Heart right ventricle (tissue), 16 donors: ENCODE measurements at regions of chr1 and their contacts with region 1.

Region 1: DNA sequence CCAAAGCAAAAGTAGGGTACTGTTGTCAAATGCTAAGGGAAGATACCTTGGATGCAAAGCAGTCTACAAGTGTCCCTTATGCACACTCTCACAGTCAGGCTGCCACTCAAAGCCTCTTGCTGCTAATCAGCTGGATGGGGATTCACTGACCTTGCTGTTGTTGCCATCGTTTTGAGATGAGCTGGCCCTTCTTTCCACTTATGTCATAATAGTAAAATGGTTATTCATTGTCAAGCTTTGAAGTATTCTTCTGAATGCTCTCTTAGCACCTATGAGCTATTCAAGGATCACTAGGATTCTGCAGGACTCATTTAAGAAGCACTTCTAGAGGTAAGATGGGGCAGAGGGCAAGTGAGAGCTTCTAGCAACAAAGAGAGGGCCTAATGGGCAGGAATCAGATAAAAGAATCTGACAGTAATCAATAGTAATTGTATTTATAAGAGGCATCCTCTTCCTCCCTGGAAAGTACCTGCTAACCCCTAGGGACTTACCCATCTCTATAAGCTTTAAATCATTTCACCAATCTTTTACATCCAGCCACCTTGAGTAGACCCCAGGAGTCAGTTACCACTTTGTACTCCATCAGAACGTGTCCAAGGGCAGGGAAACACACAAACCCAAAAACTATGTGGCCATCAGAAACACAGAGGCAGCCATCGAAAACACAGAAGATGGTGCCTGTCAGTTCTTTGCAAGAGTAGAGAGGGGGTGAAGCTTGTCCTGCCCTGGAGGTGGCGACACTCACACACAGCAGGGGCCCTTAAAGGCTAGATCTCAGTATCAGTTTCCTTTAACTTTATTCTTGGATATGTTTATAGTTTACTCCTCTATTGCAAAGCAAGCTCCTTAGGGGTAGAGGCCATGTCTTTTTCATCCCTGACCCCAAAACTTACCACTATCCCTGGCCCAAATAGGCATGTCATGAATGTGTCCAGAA is 103.7 kb upstream of the NFIA start:
- DNase-seq: peak in 1 of 2 donors; percentile 23
- ATAC-seq: peak in 4 of 8 donors; percentile 39 to 61 (median 43)
- H3K4me3 ChIP-seq: no peak overlapping the region
- H3K27ac ChIP-seq: no peak overlapping the region
- H3K4me1 ChIP-seq: peaks cover 0 to 14% (median 6%) of the 10 kb centered on the region in 9 donors
- H3K27me3 ChIP-seq: no peaks in the 10 kb centered on the region
- CTCF ChIP-seq: peak in 8 of 9 donors; percentile 16 to 67 (median 53)

Region 2: DNA sequence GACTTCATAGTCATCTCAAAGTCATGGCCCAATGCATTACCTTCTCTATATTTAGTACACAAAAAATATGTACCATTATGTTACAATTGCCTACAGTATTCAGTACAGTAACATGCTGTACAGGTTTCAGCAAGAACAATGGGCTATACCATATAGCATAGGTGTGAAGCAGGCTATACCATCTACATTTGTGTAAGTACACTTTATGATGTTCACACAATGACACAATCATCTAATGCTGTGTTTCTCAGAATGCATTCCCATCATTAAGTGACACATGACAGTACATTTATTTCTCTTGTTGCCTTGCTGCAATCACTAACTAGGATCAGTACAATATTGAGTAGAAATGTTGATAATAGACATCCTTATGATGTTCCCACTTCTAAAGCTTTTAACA is 57.2 kb after region 1 on chr1:
- intact Hi-C with region 1: loop called in 6 of 10 experiments (anchors 5 to 10 kb)
- DNase-seq: no peak
- ATAC-seq: no peak
- H3K4me3 ChIP-seq: no peak overlapping the region
- H3K27ac ChIP-seq: no peak overlapping the region
- H3K4me1 ChIP-seq: no peaks in the 10 kb centered on the region
- H3K27me3 ChIP-seq: no peaks in the 10 kb centered on the region
- CTCF ChIP-seq: no peak

Region 3: GRCh38 chr1:61343734-61344420 is 365.2 kb after region 1 on chr1:
- intact Hi-C with region 1: loop called in 1 of 10 experiments (anchors 10 kb)
- DNase-seq: no peak
- ATAC-seq: peak in 3 of 8 donors; percentile 18 to 31 (median 22)
- H3K4me3 ChIP-seq: no peak overlapping the region
- H3K27ac ChIP-seq: peak overlapping the region in 5 of 10 donors; percentile 3 to 55 (median 24)
- H3K4me1 ChIP-seq: peaks cover 5 to 44% (median 32%) of the 10 kb centered on the region in 9 donors
- H3K27me3 ChIP-seq: no peaks in the 10 kb centered on the region
- CTCF ChIP-seq: no peak

Region 4: DNA sequence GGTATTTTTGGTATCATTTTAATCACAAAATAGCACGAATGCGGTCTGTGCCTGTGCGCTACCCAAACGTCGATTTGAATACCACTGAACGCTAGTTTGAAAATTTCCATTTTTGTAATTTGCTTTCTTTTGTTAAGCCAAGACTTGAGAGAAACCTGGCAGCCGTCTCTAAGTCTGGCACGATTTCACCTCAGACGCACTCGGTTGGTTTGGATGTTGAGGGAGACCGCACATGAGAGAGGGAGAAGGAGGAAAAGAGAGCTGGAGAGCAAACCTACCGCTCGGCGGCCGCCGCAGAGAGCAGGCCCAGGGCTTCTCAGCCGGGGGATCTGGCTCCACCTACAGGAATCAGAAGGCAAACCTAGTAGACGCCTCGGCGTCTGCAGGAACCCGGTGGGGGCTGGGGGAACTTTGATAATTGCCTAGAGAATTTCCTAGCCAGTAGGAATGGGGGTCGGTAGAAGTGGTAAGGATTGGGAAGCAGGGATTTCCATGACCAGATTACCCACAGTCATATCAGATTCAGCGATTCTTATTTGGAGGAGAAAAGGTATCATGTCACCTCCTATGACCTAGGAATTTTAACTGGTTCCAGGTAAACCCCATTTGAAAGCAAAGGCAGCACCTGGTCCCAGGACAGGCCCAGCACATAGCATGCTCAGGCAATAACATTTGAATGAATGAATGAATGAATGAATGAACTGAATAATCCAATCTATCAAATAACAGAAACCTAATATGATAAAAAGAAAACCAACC is 663.1 kb after region 1 on chr1:
- intact Hi-C with region 1: loop called in 5 of 10 experiments (anchors 5 to 10 kb)
- DNase-seq: peak; percentile 78 to 79
- ATAC-seq: peak; percentile 82 to 91 (median 88)
- H3K4me3 ChIP-seq: peak overlapping the region in 6 of 10 donors; percentile 28 to 49 (median 31)
- H3K27ac ChIP-seq: peak overlapping the region in 9 of 10 donors; percentile 39 to 90 (median 77)
- H3K4me1 ChIP-seq: peaks cover 0 to 32% (median 25%) of the 10 kb centered on the region in 9 donors
- H3K27me3 ChIP-seq: no peaks in the 10 kb centered on the region
- CTCF ChIP-seq: peak; percentile 52 to 92 (median 84)

Region 5: DNA sequence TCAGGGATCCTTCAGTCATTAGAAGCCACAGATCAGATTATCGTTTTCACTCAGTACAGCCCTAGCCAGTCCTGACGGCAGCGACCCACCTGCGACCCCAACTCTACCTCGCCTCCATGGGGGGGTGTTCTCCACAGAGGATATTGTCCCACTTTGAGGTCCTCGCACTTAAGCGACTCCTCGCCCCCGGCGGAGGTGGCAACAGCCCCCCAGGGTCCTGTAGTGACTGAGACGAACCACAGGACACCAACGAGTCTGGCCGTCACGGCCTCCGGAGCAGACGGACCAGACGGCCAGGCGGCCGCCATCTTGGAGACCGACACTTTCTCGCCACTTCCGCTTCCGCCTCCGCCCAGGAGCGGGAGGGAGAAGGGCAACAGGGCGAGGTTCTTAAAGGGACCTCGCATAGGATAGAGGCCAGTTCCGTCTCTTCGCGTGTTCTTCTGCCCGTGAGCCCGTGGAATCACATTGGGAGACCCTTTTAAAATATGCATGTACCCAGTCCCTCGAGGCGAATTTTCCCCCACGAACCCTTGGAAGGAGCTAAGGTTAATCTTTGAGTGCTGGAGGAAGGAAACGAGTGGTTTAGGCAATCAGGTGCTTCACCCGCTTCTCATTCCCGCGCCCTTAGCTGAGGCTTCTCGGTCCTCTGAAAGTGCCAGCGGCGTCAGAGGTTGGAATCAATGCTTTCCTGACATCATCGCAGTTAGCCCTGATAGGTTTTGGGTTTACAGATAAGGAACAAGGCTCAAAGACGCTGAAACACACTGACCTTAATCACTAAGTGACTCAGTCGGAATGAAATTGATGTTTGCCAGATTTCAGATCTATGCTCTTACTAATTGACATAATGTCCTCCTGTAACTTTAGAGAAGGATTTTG is 746.4 kb after region 1 on chr1 and contains the start of gene TM2D1:
- intact Hi-C with region 1: loop called in 1 of 10 experiments (anchors 10 kb)
- DNase-seq: peak; percentile 89
- ATAC-seq: peak; percentile 98 to 100 (median 99)
- H3K4me3 ChIP-seq: peak within 1 kb of the TSS; percentile 75 to 97 (median 80)
- H3K27ac ChIP-seq: peak within 1 kb of the TSS; percentile 77 to 98 (median 91)
- H3K4me1 ChIP-seq: peaks cover 5 to 30% (median 20%) of the 10 kb centered on the region in 9 donors
- H3K27me3 ChIP-seq: no peaks in the 10 kb centered on the region
- CTCF ChIP-seq: no peak
- total RNA-seq, gene TM2D1: 29.4 to 44.7 (median 36.8) TPM

Region 6: DNA sequence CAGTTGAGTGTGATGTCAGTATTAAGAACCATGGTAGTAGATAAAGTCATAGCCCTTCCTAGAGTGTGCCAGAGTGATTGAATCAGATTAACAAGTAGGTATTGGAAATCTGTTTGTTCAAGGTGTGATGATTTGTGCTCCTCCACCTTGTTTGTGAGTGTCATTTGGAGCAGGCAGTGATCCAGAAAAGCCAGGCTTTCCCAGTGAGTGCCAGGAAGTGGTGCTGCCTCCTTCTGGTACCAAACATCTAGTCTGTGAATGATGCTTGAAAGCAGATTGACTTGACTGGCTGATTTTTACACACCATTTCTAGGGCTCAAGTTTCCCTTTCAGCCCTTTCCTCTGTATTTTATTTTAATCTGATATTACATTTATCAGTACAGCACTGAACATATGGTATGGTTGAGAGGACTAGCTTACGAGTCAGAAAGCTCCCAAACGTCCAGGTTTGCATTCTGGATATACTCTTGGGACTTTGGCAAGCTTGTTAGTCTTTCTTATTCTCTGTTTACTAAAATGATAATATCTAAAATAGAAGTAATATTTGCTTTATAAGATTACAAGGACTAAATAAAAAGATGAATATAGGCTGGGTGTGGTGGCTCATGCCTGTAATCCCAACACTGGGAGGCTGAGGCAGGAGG is 864.3 kb after region 1 on chr1:
- intact Hi-C with region 1: loop called in 1 of 10 experiments (anchors 10 kb)
- DNase-seq: no peak
- ATAC-seq: no peak
- H3K4me3 ChIP-seq: no peak overlapping the region
- H3K27ac ChIP-seq: no peak overlapping the region
- H3K4me1 ChIP-seq: peaks cover 0 to 17% (median 7%) of the 10 kb centered on the region in 9 donors
- H3K27me3 ChIP-seq: no peaks in the 10 kb centered on the region
- CTCF ChIP-seq: peak in 7 of 9 donors; percentile 12 to 37 (median 28)